Calu3 (cell line): ENCODE measurements at regions of chr12 and their contacts with region 1.

Region 1: DNA sequence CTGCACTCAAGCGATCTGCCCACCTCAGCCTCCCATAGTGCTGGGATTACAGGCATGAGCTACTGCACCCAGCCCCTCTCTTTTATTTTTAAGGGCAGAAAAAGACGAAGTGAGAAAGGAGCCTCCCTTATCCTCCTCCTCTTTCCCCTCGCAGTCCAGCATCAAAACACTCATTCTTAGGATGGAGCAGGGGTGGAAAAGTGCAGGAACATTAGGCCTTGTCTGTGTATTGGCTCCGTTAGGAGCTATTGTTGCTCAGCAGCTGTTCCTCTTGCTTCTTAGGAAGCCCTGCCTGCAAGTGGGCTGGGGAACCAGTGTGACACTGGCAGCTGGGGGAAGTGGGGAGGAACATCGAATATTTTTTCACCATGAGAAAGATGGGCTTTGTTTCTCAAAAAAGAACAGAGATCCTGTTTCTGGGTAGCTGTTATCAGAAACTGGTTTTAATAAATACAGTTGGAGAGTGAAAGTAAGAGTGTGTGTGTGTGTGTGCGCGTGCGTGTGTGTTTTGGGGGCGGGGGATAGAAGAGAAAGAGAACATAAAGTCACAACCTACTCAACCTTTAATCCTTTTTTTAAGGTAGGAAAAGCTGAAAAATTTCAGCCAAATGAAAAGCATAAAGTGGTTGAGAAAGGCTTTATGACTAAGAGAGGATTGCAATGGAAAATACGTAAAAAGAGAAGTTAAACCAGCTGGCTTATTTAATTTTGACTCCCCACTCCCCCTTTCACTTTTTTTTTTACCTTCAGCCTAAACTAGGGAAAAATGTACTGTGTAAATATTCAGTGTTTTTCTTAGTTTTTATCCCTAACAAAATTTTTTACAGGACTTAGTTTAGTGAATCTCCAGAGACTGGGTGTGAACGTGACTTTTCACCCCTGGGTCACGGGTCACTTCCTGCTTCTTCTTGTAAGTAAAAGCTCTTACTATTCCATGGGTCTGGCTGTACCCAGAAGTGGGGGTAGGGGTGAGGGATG is 197.2 kb upstream of the PLEKHG7 start:
- DNase-seq: peak; percentile 27
- H3K4me3 Mint-ChIP-seq: peak overlapping the region; percentile 53
- H3K27ac Mint-ChIP-seq: peak overlapping the region; percentile 62
- H3K4me1 Mint-ChIP-seq: peaks cover 48% of the 10 kb centered on the region
- H3K27me3 Mint-ChIP-seq: no peaks in the 10 kb centered on the region
- CTCF ChIP-seq: no peak

Region 2: GRCh38 chr12:92356425-92356824 is 149.1 kb before region 1 on chr12:
- CTCF ChIA-PET with region 1: no interaction called
- intact Hi-C with region 1: no loop called
- DNase-seq: no peak
- H3K4me3 Mint-ChIP-seq: no peak overlapping the region
- H3K27ac Mint-ChIP-seq: no peak overlapping the region
- H3K4me1 Mint-ChIP-seq: no peaks in the 10 kb centered on the region
- H3K27me3 Mint-ChIP-seq: no peaks in the 10 kb centered on the region
- CTCF ChIP-seq: no peak

Region 3: DNA sequence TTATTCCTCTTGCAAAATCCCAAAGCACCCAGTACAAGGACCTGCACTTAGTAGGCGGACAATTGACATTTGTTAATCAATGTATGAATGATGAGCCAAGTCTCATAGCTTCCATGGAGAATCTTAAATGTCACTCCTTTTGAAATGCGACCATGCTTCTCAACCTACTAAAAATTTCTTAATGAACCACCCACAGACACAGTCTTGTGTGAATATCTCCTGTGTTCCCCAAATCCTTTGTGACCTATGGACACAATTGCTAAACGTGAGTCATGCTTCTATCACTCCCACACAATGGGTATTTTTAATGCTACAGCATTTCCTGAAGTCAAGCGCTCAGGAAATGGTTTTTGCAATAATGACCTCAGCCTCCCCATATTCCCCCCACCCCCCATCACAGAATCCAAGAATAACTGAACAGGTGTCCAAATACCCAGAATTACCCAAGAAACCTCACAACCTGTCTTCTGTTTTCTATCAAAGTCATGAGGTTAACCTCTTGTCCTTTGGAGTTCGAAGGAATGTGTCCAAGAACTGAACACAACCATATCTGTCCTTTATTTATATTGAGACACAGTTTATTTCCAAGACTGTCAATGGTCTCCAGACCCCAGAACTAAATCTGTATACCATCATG is 33.7 kb after region 1 on chr12:
- CTCF ChIA-PET with region 1: interaction called, 4 read pairs
- intact Hi-C with region 1: loop called (anchors 2 kb)
- DNase-seq: peak; percentile 63
- H3K4me3 Mint-ChIP-seq: peak overlapping the region; percentile 6
- H3K27ac Mint-ChIP-seq: peak overlapping the region; percentile 95
- H3K4me1 Mint-ChIP-seq: peaks cover 74% of the 10 kb centered on the region
- H3K27me3 Mint-ChIP-seq: no peaks in the 10 kb centered on the region
- CTCF ChIP-seq: no peak

Region 4: GRCh38 chr12:92546635-92547348 is 41.2 kb after region 1 on chr12:
- CTCF ChIA-PET with region 1: interaction called, 8 read pairs
- intact Hi-C with region 1: loop called (anchors 2 kb)
- DNase-seq: peak; percentile 41
- H3K4me3 Mint-ChIP-seq: peak overlapping the region; percentile 17
- H3K27ac Mint-ChIP-seq: peak overlapping the region; percentile 74
- H3K4me1 Mint-ChIP-seq: peaks cover 68% of the 10 kb centered on the region
- H3K27me3 Mint-ChIP-seq: no peaks in the 10 kb centered on the region
- CTCF ChIP-seq: no peak

Region 5: GRCh38 chr12:92608151-92609091 is 102.9 kb after region 1 on chr12:
- CTCF ChIA-PET with region 1: no interaction called
- intact Hi-C with region 1: loop called (anchors 1 kb)
- DNase-seq: peak; percentile 13
- H3K4me3 Mint-ChIP-seq: no peak overlapping the region
- H3K27ac Mint-ChIP-seq: peak overlapping the region; percentile 65
- H3K4me1 Mint-ChIP-seq: peaks cover 37% of the 10 kb centered on the region
- H3K27me3 Mint-ChIP-seq: no peaks in the 10 kb centered on the region
- CTCF ChIP-seq: peak; percentile 34

Region 6: DNA sequence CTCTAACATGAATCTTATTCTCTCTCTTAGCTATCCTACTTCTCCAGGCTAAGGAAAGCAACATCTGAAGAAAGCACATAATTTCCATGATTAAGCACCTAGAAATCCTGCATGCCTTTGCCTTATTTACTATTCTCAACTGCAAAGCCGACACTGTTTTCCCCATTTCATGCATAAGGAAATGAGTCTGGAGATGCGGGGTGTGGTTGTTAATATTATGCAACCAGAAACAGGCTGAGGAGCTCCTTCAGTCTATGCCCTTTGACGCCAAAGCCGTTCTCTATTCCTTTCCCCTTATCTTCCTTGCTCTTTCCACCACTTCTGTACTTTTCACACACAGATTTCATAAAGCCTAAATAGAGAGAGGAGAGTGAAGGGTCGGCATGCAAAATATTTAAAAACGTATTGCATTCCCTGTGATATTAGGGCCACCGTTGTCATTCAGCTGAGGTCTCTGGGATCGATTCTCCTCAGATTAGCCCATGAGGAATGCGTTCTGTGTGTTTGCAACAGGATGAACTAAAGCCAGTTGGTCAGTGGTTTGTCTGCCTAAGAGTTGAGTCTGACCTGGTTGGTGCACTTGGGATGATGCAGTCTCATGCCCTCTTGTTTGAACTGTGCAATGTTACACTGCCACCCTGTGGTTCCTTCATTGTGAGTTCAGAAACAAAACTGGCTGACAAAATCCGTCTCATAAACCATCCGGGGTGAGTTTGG is 144.1 kb after region 1 on chr12:
- CTCF ChIA-PET with region 1: interaction called, 3 read pairs
- intact Hi-C with region 1: loop called (anchors 1 kb)
- DNase-seq: peak; percentile 78
- H3K4me3 Mint-ChIP-seq: peak overlapping the region; percentile 54
- H3K27ac Mint-ChIP-seq: peak overlapping the region; percentile 71
- H3K4me1 Mint-ChIP-seq: peaks cover 47% of the 10 kb centered on the region
- H3K27me3 Mint-ChIP-seq: no peaks in the 10 kb centered on the region
- CTCF ChIP-seq: peak; percentile 63

Region 7: GRCh38 chr12:92810370-92810769 is 304.8 kb after region 1 on chr12:
- CTCF ChIA-PET with region 1: no interaction called
- intact Hi-C with region 1: no loop called
- DNase-seq: no peak
- H3K4me3 Mint-ChIP-seq: no peak overlapping the region
- H3K27ac Mint-ChIP-seq: no peak overlapping the region
- H3K4me1 Mint-ChIP-seq: no peaks in the 10 kb centered on the region
- H3K27me3 Mint-ChIP-seq: no peaks in the 10 kb centered on the region
- CTCF ChIP-seq: no peak